Lower leg skin (tissue), 4 donors: ENCODE measurements at regions of chr13 and their contacts with region 1.

Region 1: GRCh38 chr13:76004416-76004815 is 368.3 kb downstream of the LMO7 start:
- DNase-seq: no peak
- H3K4me3 ChIP-seq: no peak overlapping the region
- CTCF ChIP-seq: no peak
- POLR2A ChIP-seq: no peak

Region 2: GRCh38 chr13:76473552-76474134 is 469.2 kb after region 1 on chr13:
- intact Hi-C with region 1: loop called (anchors 5 kb)
- DNase-seq: peak; percentile 71 to 88
- H3K4me3 ChIP-seq: no peak overlapping the region
- CTCF ChIP-seq: peak in 2 of 3 donors; percentile 16 to 73
- POLR2A ChIP-seq: no peak